ENCODE measurements at regions of chr6 and their contacts with region 1.

Region 1: DNA sequence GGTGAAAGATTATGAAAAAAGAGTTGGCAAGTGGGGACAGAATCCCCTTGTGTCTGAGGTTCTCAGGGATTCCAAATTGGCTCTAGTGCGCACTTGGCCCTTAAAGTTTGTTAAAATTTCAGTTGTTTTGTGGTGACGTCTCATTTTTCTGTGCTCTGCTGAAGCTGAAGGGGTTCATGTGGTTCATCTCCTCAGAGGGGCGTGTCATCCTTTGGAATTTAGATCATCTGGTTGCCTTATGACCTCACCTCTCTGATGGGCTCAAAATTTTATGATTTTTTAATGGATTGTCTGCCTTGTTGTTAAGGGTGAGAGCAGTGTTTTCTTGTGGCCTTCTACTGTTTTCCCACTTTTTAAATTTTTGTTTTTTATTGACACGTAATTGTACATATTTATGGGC is 20.3 kb downstream of the CYB5R4 start:
- DNase-seq: no peak
- CTCF ChIP-seq: no peak

Region 2: DNA sequence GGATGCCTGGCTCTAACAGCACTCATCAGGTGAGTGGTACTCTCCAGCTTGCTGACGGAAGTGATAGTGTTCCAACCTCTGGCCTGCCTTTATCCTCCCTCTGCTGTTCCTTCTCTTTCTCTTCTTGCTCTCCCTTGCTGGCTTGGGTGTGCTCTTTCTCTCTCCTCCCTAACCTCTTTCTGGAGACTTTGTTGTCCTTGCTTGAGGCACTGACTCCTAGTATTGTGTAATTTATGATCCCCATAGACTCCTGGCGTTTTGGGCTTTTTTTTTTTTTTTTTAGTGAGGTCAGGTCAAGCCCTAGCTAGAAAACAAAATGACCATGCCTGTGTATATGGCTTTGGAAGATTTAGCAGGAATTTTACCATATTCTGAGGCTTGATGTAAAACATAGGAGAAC is 69.1 kb after region 1 on chr6:
- in situ Hi-C with region 1: no loop called
- DNase-seq: no peak
- CTCF ChIP-seq: no peak

Region 3: GRCh38 chr6:84220809-84221409 is 341.2 kb after region 1 on chr6:
- in situ Hi-C with region 1: loop called (anchors 5 kb)
- DNase-seq: no peak
- CTCF ChIP-seq: peak; percentile 23